ENCODE measurements at regions of chr14 and their contacts with region 1.

Region 1: DNA sequence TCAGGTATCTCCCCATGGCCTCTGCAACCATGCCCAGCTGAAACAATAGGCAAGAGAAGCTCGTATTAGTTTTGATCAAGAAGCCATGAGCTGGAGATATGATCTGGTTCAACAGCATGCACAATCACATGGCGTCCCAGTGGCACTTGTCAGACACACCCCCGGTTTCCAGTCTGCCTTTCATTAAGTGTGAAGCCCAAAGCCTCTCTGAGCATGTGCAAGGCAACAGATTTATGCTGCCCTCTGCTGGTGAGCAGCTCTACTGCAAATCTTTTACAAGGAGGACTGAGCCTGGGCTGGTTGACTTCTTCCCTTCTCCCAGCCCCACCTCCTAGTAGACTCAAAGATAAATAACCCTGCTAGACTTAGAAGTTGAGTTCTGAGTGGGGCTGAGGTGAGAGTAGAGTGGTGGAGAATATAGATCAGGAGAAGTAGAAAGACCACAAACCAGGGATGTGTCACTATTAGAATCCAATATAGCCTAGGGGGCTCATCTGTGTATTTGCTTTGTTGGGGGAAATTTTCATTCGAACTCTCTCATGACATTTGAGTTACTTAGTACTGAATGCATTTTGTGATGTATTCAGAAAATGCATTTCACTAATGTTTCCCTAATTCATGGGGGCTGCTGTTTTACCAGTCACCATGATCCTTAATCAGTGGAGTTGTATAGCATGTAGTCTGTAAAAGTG is 53.7 kb upstream of the MBIP start:
- DNase-seq: peak; percentile 81
- H3K4me3 Mint-ChIP-seq: no peak overlapping the region
- H3K27ac Mint-ChIP-seq: no peak overlapping the region
- H3K4me1 Mint-ChIP-seq: no peaks in the 10 kb centered on the region
- H3K27me3 Mint-ChIP-seq: peaks cover 4% of the 10 kb centered on the region

Region 2: GRCh38 chr14:35883677-35884293 is 490.3 kb before region 1 on chr14:
- CTCF ChIA-PET with region 1: interaction called, 34 read pairs
- DNase-seq: peak; percentile 53
- H3K4me3 Mint-ChIP-seq: no peak overlapping the region
- H3K27ac Mint-ChIP-seq: no peak overlapping the region
- H3K4me1 Mint-ChIP-seq: peaks cover 5% of the 10 kb centered on the region
- H3K27me3 Mint-ChIP-seq: peaks cover 13% of the 10 kb centered on the region

Region 3: DNA sequence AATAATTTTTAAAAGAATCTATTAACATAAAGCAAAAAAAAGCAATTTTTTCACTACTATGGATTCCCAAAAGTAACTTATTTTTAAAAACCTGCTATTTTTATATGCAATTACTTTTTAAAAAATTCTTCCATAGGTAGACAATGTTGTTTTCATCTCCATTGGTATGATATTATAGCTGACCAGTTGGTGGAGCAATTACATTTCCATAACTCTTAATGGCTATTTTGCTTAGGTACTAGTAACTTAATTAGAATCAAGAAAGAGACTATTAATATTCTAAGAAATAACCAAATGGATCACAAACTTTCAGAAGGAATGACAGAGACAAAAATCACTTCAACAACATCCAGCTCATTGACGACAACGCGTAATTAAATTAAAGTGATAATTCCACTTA is 132.9 kb before region 1 on chr14:
- CTCF ChIA-PET with region 1: interaction called, 10 read pairs
- DNase-seq: no peak
- H3K4me3 Mint-ChIP-seq: no peak overlapping the region
- H3K27ac Mint-ChIP-seq: no peak overlapping the region
- H3K4me1 Mint-ChIP-seq: no peaks in the 10 kb centered on the region
- H3K27me3 Mint-ChIP-seq: no peaks in the 10 kb centered on the region